Activated CD4-positive, alpha-beta T cell treated with anti-CD3 and anti-CD28 coated beads for 36 hours (primary cell): ENCODE measurements at regions of chr2 and their contacts with region 1.

Region 1: GRCh38 chr2:162221064-162221463 is 22.2 kb downstream of the FAP start:
- DNase-seq: peak; percentile 75
- ATAC-seq: peak; percentile 57
- H3K4me3 Mint-ChIP-seq: no peak overlapping the region
- H3K27ac Mint-ChIP-seq: no peak overlapping the region
- H3K4me1 Mint-ChIP-seq: no peaks in the 10 kb centered on the region
- H3K27me3 Mint-ChIP-seq: peaks cover 16% of the 10 kb centered on the region

Region 2: DNA sequence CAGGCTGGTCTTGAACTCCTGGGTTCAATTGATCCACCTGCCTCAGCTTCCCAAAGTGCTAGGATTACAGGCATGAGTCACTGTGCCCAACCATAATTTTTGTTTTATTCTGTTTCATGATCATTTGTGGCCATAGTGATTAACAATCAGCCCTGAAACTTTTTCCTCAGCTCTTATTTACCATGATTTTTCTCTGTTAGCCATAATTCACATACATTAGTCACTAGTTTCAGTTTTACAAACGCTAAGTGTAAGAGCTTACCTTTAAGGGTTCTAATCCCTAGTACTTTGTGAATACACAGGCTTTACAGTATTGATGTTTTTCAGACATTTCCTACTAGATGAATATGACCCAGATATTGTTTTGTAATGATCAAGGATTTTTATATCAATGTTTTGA is 363.1 kb before region 1 on chr2:
- CTCF ChIA-PET with region 1: no interaction called
- POLR2A ChIA-PET with region 1: no interaction called
- intact Hi-C with region 1: no loop called
- DNase-seq: no peak
- ATAC-seq: peak; percentile 96
- H3K4me3 Mint-ChIP-seq: no peak overlapping the region
- H3K27ac Mint-ChIP-seq: no peak overlapping the region
- H3K4me1 Mint-ChIP-seq: peaks cover 6% of the 10 kb centered on the region
- H3K27me3 Mint-ChIP-seq: no peaks in the 10 kb centered on the region

Region 3: GRCh38 chr2:162153608-162154224 is 67.3 kb before region 1 on chr2:
- CTCF ChIA-PET with region 1: interaction called, 23 read pairs
- POLR2A ChIA-PET with region 1: no interaction called
- intact Hi-C with region 1: loop called (anchors 2 to 5 kb)
- DNase-seq: peak; percentile 76
- ATAC-seq: peak; percentile 95
- H3K4me3 Mint-ChIP-seq: no peak overlapping the region
- H3K27ac Mint-ChIP-seq: no peak overlapping the region
- H3K4me1 Mint-ChIP-seq: no peaks in the 10 kb centered on the region
- H3K27me3 Mint-ChIP-seq: peaks cover 26% of the 10 kb centered on the region

Region 4: GRCh38 chr2:162184821-162185446 is 36.1 kb before region 1 on chr2:
- CTCF ChIA-PET with region 1: interaction called, 10 read pairs
- POLR2A ChIA-PET with region 1: no interaction called
- intact Hi-C with region 1: no loop called
- DNase-seq: no peak
- ATAC-seq: no peak
- H3K4me3 Mint-ChIP-seq: no peak overlapping the region
- H3K27ac Mint-ChIP-seq: no peak overlapping the region
- H3K4me1 Mint-ChIP-seq: peaks cover 4% of the 10 kb centered on the region
- H3K27me3 Mint-ChIP-seq: peaks cover 4% of the 10 kb centered on the region

Region 5: DNA sequence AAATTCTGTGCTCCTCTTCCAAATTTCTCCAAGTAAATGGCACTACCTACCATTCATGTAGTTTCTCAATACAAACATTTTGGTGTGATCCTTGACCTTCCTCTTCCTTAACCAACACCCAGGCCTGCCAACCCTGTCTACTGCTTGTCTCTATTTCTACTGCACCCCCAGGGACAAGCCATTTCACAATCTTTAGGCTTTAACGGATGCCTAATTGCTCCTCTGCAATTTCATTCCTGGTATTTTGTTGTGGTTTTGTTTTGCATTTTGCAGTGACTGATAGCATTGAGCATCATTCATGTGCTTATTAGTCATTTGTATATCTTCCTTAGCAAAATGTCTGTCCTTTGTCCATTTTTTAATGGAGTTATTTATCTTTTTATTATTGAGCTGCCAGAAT is 12.1 kb after region 1 on chr2:
- CTCF ChIA-PET with region 1: interaction called, 29 read pairs
- POLR2A ChIA-PET with region 1: no interaction called
- intact Hi-C with region 1: no loop called
- DNase-seq: no peak
- ATAC-seq: no peak
- H3K4me3 Mint-ChIP-seq: no peak overlapping the region
- H3K27ac Mint-ChIP-seq: no peak overlapping the region
- H3K4me1 Mint-ChIP-seq: no peaks in the 10 kb centered on the region
- H3K27me3 Mint-ChIP-seq: peaks cover 7% of the 10 kb centered on the region

Region 6: GRCh38 chr2:162293122-162293786 is 72.2 kb after region 1 on chr2:
- CTCF ChIA-PET with region 1: interaction called, 246 read pairs
- POLR2A ChIA-PET with region 1: interaction called, 6 read pairs
- intact Hi-C with region 1: loop called (anchors 1 kb)
- DNase-seq: no peak
- ATAC-seq: no peak
- H3K4me3 Mint-ChIP-seq: no peak overlapping the region
- H3K27ac Mint-ChIP-seq: no peak overlapping the region
- H3K4me1 Mint-ChIP-seq: no peaks in the 10 kb centered on the region
- H3K27me3 Mint-ChIP-seq: no peaks in the 10 kb centered on the region

Region 7: GRCh38 chr2:162333968-162334367 is 112.9 kb after region 1 on chr2:
- CTCF ChIA-PET with region 1: no interaction called
- POLR2A ChIA-PET with region 1: no interaction called
- intact Hi-C with region 1: loop called in 1 of 2 experiments (anchors 1 kb)
- DNase-seq: peak; percentile 42
- ATAC-seq: peak; percentile 33
- H3K4me3 Mint-ChIP-seq: no peak overlapping the region
- H3K27ac Mint-ChIP-seq: no peak overlapping the region
- H3K4me1 Mint-ChIP-seq: no peaks in the 10 kb centered on the region
- H3K27me3 Mint-ChIP-seq: no peaks in the 10 kb centered on the region